ENCODE measurements at regions of chr11 and their contacts with region 1.

Region 1: DNA sequence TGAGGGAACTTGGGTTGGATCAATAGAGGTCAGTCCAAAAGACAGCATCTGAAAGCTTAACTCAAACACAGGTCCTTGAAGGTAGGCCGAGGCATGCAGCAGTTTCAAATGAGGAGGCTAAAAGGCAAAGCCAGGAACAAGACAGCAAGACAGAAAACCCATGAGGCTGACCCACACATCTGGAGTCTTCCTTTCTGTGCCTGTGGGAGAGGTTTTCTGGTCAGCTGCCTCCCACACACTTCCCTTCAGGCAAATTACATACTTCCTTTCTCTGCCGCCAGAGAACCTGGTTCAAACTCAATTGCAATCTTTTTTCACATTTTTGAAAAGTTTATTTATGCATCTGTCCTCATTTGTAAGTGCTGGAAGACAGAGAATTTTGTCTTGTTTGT is 29.8 kb upstream of the CRTAM start:
- DNase-seq: peak; percentile 56
- ATAC-seq: peak; percentile 49
- H3K4me3 Mint-ChIP-seq: peak overlapping the region; percentile 55
- H3K27ac Mint-ChIP-seq: peak overlapping the region; percentile 76
- H3K4me1 Mint-ChIP-seq: peaks cover 65% of the 10 kb centered on the region
- H3K27me3 Mint-ChIP-seq: no peaks in the 10 kb centered on the region
- CTCF ChIP-seq: no peak

Region 2: GRCh38 chr11:122618927-122619326 is 189.5 kb before region 1 on chr11:
- CTCF ChIA-PET with region 1: no interaction called
- POLR2A ChIA-PET with region 1: no interaction called
- intact Hi-C with region 1: no loop called
- DNase-seq: no peak
- ATAC-seq: no peak
- H3K4me3 Mint-ChIP-seq: no peak overlapping the region
- H3K27ac Mint-ChIP-seq: no peak overlapping the region
- H3K4me1 Mint-ChIP-seq: peaks cover 3% of the 10 kb centered on the region
- H3K27me3 Mint-ChIP-seq: no peaks in the 10 kb centered on the region
- CTCF ChIP-seq: no peak

Region 3: DNA sequence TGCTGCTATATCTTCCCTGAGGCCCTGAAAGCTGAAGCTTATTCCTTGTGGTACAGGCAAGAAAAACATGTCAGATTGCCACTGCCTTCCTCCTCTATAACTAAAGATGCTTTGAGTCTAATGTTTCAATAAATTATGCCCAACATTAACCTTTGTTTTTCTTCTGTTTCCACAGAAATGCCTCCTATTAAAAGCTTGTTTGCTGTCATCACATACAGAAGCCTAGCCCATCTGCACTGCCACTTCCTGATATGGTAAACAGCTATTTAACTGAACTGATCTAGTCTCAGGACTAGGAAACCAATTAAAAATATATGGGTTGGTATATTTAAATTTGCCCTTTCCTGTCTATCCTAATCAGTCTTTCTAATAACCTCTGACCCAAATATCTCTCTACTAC is 12.7 kb after region 1 on chr11:
- CTCF ChIA-PET with region 1: interaction called, 18 read pairs
- POLR2A ChIA-PET with region 1: no interaction called
- intact Hi-C with region 1: no loop called
- DNase-seq: no peak
- ATAC-seq: no peak
- H3K4me3 Mint-ChIP-seq: no peak overlapping the region
- H3K27ac Mint-ChIP-seq: no peak overlapping the region
- H3K4me1 Mint-ChIP-seq: peaks cover 22% of the 10 kb centered on the region
- H3K27me3 Mint-ChIP-seq: no peaks in the 10 kb centered on the region
- CTCF ChIP-seq: no peak